Esophagus squamous epithelium (tissue), 5 donors: ENCODE measurements at regions of chr22 and their contacts with region 1.

Region 1: DNA sequence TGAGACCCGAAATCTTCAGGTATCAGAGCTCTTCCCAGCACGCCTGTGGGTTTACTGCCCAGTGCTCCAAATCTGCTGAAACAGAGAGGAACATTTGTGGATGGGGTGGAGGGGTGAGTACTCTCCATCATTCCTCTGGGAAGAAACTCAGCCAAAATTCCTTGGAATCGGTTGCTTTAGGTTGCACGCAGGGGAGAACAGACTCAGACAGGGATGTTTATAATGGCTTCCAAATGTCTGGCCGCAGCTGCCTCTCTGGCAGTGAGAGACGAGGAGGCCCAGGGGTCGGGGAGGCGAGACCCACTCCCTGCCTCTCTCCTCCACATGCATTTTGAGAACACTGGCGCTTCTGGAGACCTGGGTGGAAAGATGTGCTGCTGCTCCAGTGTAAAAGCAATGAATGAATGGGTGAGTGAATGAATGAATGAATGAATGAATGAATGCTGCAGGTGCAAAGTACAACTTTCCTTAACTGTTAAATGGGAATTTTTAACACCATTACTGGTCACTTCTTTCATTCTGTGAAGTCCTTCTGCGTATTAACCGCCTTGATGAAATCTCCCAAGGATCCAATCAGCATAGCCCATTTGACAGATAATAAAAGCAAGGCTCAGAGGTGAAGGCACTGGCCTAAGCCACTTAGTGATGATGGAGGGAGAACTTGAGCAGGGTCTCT is 437.4 kb downstream of the MIAT start:
- DNase-seq: no peak
- H3K4me3 ChIP-seq: no peak overlapping the region
- H3K27ac ChIP-seq: no peak overlapping the region
- H3K4me1 ChIP-seq: peaks cover 0 to 3% (median 0%) of the 10 kb centered on the region in 3 donors
- H3K27me3 ChIP-seq: peaks cover 0 to 46% (median 0%) of the 10 kb centered on the region in 4 donors
- CTCF ChIP-seq: no peak
- POLR2A ChIP-seq: no peak

Region 2: GRCh38 chr22:26597026-26597425 is 497.7 kb before region 1 on chr22:
- intact Hi-C with region 1: no loop called
- DNase-seq: no peak
- H3K4me3 ChIP-seq: no peak overlapping the region
- H3K27ac ChIP-seq: no peak overlapping the region
- H3K4me1 ChIP-seq: peaks cover 0 to 8% (median 6%) of the 10 kb centered on the region in 3 donors
- H3K27me3 ChIP-seq: peaks cover 0 to 30% (median 0%) of the 10 kb centered on the region in 4 donors
- CTCF ChIP-seq: no peak
- POLR2A ChIP-seq: no peak

Region 3: DNA sequence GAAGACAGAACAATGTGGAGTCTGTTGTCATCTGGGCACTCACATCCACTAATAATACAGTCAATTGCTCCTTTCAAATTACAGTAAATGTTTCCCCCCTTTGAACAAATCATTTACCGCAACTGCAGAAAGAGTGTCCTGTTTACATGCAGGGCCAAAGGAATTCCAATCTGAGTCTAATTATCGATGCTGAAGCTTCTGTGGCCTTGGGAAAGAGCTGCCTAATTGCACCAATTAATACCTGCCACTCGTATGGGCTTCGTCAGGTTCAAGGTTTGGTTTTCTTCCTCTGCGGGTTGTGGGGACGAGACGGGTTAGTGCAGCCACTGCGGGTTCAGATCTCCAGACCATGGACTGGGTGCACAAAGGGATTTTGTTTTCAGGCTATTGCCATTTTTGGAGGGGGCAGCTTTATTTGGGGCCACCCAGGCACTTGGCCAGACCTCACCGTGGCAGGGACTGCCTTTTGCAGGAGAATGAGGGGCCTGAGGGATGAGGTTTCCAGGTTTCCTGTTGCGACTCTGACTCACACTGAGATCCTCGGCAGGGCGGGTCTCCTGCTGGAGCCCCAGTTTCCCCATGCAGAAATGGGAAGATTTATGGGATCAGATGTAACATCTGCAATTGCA is 289.7 kb before region 1 on chr22:
- intact Hi-C with region 1: no loop called
- DNase-seq: no peak
- H3K4me3 ChIP-seq: no peak overlapping the region
- H3K27ac ChIP-seq: no peak overlapping the region
- H3K4me1 ChIP-seq: no peaks in the 10 kb centered on the region
- H3K27me3 ChIP-seq: no peaks in the 10 kb centered on the region
- CTCF ChIP-seq: no peak
- POLR2A ChIP-seq: no peak

Region 4: GRCh38 chr22:27195094-27195493 is 100.3 kb after region 1 on chr22:
- intact Hi-C with region 1: loop called (anchors 10 kb)
- DNase-seq: no peak
- H3K4me3 ChIP-seq: no peak overlapping the region
- H3K27ac ChIP-seq: peak overlapping the region in 3 of 4 donors; percentile 31 to 79 (median 60)
- H3K4me1 ChIP-seq: peaks cover 0 to 25% (median 0%) of the 10 kb centered on the region in 3 donors
- H3K27me3 ChIP-seq: peaks cover 0 to 8% (median 0%) of the 10 kb centered on the region in 4 donors
- CTCF ChIP-seq: no peak
- POLR2A ChIP-seq: no peak